PC-9 (cell line): ENCODE measurements at regions of chr19 and their contacts with region 1.

Region 1: DNA sequence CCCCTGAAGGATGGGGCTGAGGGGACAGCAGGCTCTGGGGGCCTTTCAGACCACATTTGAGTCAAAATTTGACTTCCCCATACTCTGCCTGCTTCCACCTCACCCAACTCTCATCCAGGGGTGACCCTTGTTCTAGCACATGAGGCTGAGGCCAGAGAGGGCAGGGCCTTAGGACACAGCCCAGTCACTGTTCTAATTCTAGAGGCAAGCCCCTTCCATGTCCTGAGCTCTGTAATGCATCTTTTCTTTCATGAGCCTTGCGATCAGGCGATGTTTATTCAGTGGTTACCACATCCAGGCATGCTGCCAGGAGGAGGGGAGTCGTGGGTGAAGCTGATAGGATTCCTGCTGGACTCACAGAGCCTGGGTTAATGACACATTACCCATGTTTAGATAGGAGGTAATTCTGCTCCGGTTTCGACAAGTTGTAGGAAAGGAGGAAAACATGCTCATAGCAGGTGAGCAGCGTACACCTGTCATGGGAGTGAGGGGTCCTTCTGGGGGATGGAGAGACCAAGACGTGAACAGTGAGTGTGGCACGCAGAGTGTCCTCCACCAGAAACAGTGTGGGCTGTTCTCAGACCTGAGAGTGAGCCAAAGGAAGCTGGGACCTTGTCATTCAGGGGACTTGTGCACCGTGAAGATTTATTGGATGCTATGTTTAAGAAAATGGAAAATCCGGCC is 9.3 kb downstream of the RPS9 start:
- DNase-seq: peak; percentile 95 to 96
- H3K4me3 ChIP-seq: no peak overlapping the region
- H3K27ac ChIP-seq: peak overlapping the region; percentile 60
- H3K4me1 ChIP-seq: peaks cover 34% of the 10 kb centered on the region
- H3K27me3 ChIP-seq: no peaks in the 10 kb centered on the region
- CTCF ChIP-seq: no peak

Region 2: GRCh38 chr19:54266133-54266532 is 56.2 kb after region 1 on chr19:
- CTCF ChIA-PET with region 1: no interaction called
- POLR2A ChIA-PET with region 1: interaction called, 16 read pairs
- intact Hi-C with region 1: no loop called
- DNase-seq: peak; percentile 69 to 79
- H3K4me3 ChIP-seq: no peak overlapping the region
- H3K27ac ChIP-seq: no peak overlapping the region
- H3K4me1 ChIP-seq: no peaks in the 10 kb centered on the region
- H3K27me3 ChIP-seq: peaks cover 77% of the 10 kb centered on the region
- CTCF ChIP-seq: peak; percentile 95